ENCODE measurements at regions of chr6 and their contacts with region 1.

Region 1: DNA sequence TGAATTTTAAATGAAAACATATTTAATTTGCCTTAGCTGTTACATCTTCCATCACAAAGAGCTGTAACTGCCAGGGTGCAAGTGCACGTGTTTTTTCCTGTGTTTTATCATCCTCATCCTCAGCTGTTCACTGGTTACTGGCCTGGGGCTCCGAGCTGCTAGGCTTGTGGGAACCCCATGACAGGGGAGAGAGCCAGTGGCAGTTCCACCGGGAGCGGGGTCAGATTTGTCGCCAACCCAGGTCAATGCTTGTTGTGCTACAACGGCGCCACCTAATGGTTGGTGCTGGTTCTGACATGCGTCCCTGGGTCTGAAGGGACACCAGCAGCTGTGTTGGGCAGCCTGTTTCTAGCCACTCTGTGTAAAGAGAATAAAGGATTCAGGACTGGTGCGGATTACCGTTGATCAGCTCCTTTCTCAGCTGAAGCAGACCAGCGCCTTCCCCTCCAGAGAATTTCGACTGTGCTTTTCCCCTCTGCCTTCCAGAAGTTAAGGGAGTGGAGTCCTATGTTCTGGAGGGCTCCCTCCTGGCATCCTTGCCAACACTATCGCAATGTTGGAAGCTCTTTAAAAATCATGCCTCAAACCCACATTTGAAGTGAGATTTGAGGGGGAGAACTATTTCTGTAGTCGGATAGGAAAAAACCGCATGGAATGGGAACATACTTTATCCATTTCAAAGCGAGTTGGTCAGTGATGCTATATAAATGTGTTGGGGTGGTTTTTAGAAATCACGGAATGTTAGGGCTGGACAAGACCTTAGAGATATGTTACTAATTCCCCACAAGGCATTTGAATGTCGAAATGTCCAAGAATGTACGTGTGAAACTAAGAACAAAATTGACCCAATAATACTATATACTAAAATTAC is 32.1 kb downstream of the SUMO4 start:
- DNase-seq: peak; percentile 75 to 83 (median 80)
- H3K4me3 ChIP-seq: peak overlapping the region in 1 of 2 donors; percentile 3
- H3K4me3 Mint-ChIP-seq: peak overlapping the region in 7 of 8 donors; percentile 72 to 84 (median 80)
- H3K27ac ChIP-seq: no peak overlapping the region
- H3K27ac Mint-ChIP-seq: peak overlapping the region in 6 of 7 donors; percentile 56 to 93 (median 76)
- H3K4me1 ChIP-seq: peaks cover 8% of the 10 kb centered on the region
- H3K4me1 Mint-ChIP-seq: peaks cover 4 to 9% (median 6%) of the 10 kb centered on the region in 4 donors
- H3K27me3 ChIP-seq: no peaks in the 10 kb centered on the region
- H3K27me3 Mint-ChIP-seq: no peaks in the 10 kb centered on the region

Region 2: DNA sequence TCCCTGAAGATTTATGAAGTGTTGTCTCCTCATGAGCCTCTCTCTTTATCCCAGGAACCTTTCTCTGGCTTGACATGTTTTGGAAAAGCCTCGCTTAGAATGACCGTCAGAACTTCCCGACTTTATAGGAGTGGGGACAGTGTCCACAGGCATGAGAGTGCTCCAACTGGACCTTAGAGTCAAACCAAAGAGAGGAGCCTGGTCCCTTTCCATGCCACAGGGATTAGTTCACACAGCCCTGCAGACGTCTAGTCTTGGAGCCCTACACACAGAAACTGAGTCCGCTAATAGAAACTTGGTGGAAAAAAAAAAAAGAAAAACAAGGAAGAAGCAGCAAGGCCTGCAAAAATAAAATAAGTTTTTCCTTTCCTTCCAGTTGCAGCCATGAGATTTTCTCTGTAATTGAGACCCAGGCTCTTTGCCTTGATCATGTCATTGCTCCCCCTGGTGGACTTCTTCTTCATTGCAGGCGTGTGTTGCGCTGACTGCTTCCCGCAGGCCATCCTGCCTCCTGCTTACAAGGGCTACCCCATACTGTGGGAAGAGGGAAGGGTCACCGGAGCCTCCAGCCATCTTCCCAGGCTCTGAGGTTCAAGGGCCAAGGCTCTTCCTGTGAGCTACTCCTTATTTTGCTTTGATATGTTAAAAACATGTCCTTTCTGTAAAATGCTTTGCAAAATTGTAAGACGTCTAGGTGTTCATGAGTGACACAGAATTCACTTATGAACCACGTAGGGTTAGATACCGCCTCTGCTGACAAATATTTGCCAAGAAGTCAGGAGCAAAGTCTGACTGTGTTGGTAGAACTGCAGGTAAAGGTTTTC is 484.3 kb before region 1 on chr6:
- CTCF ChIA-PET with region 1: no interaction called
- POLR2A ChIA-PET with region 1: no interaction called
- intact Hi-C with region 1: no loop called
- DNase-seq: peak; percentile 70 to 82 (median 79)
- H3K4me3 ChIP-seq: no peak overlapping the region
- H3K4me3 Mint-ChIP-seq: no peak overlapping the region
- H3K27ac ChIP-seq: no peak overlapping the region
- H3K27ac Mint-ChIP-seq: no peak overlapping the region
- H3K4me1 ChIP-seq: no peaks in the 10 kb centered on the region
- H3K4me1 Mint-ChIP-seq: peaks cover 0 to 5% (median 4%) of the 10 kb centered on the region in 4 donors
- H3K27me3 ChIP-seq: no peaks in the 10 kb centered on the region
- H3K27me3 Mint-ChIP-seq: no peaks in the 10 kb centered on the region

Region 3: GRCh38 chr6:149028767-149029405 is 403.3 kb before region 1 on chr6:
- CTCF ChIA-PET with region 1: interaction called, 239 read pairs
- POLR2A ChIA-PET with region 1: interaction called, 14 read pairs
- intact Hi-C with region 1: loop called (anchors 1 kb)
- DNase-seq: peak; percentile 77 to 80 (median 78)
- H3K4me3 ChIP-seq: no peak overlapping the region
- H3K4me3 Mint-ChIP-seq: peak overlapping the region in 2 of 8 donors; percentile 66 to 69
- H3K27ac ChIP-seq: no peak overlapping the region
- H3K27ac Mint-ChIP-seq: peak overlapping the region in 6 of 7 donors; percentile 10 to 93 (median 78)
- H3K4me1 ChIP-seq: peaks cover 49% of the 10 kb centered on the region
- H3K4me1 Mint-ChIP-seq: peaks cover 33 to 46% (median 42%) of the 10 kb centered on the region in 4 donors
- H3K27me3 ChIP-seq: no peaks in the 10 kb centered on the region
- H3K27me3 Mint-ChIP-seq: no peaks in the 10 kb centered on the region

Region 4: GRCh38 chr6:149065658-149066556 is 366.2 kb before region 1 on chr6:
- CTCF ChIA-PET with region 1: interaction called, 15 read pairs
- POLR2A ChIA-PET with region 1: interaction called, 6 read pairs
- intact Hi-C with region 1: no loop called
- DNase-seq: peak; percentile 80 to 88 (median 85)
- H3K4me3 ChIP-seq: peak overlapping the region in 1 of 2 donors; percentile 31
- H3K4me3 Mint-ChIP-seq: peak overlapping the region; percentile 47 to 87 (median 82)
- H3K27ac ChIP-seq: peak overlapping the region; percentile 73
- H3K27ac Mint-ChIP-seq: peak overlapping the region; percentile 63 to 99 (median 98)
- H3K4me1 ChIP-seq: peaks cover 46% of the 10 kb centered on the region
- H3K4me1 Mint-ChIP-seq: peaks cover 25 to 55% (median 29%) of the 10 kb centered on the region in 4 donors
- H3K27me3 ChIP-seq: no peaks in the 10 kb centered on the region
- H3K27me3 Mint-ChIP-seq: no peaks in the 10 kb centered on the region

Region 5: GRCh38 chr6:149094156-149094555 is 338.0 kb before region 1 on chr6:
- CTCF ChIA-PET with region 1: interaction called, 83 read pairs
- POLR2A ChIA-PET with region 1: no interaction called
- intact Hi-C with region 1: no loop called
- DNase-seq: peak in 1 of 5 donors; percentile 12
- H3K4me3 ChIP-seq: peak overlapping the region in 1 of 2 donors; percentile 13
- H3K4me3 Mint-ChIP-seq: peak overlapping the region; percentile 57 to 76 (median 68)
- H3K27ac ChIP-seq: peak overlapping the region; percentile 27
- H3K27ac Mint-ChIP-seq: peak overlapping the region; percentile 74 to 96 (median 92)
- H3K4me1 ChIP-seq: peaks cover 65% of the 10 kb centered on the region
- H3K4me1 Mint-ChIP-seq: peaks cover 36 to 63% (median 52%) of the 10 kb centered on the region in 4 donors
- H3K27me3 ChIP-seq: no peaks in the 10 kb centered on the region
- H3K27me3 Mint-ChIP-seq: no peaks in the 10 kb centered on the region

Region 6: DNA sequence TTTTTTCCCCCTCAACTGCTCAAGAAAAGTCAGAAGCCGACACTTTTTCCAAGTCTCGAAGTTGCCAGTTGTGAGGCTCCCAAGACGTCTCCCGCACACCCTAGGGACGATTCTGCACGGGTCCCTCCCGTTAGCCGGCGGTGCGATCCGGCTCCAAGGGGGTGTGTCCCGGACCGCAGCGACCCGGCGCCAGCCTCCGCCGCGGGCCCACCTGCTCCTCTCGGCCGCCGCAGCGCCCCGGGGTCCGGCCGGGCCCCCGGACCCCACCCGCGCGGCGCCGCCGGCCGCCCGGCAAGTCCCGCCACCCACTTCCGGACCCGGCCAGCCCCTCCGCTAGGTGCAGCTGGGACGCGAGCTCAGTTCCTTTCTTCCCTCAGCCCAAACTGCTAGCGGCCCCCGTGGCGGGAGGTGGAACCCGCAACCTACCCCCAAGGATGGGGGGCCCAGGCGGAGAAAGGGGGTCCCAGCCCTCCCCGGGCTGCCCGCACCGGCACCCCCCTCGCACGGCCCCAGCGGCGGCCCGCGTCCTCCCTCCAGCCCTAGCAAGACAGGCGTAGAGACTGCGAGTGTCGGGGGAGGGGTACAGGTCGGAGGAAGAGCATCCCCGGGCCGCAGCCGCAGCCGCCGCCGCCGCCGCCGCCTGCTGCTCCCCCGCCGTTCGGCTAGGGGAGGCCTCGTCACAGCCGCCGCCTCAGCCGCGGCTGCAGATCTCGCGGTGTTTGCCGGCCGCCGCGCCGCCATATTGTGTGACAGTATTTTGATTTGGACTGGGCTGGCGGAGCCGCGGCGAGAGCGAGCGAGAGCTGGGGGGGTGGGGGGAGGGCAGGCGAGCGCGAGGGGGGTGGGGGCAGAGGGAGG is 115.1 kb before region 1 on chr6:
- CTCF ChIA-PET with region 1: interaction called, 11 read pairs
- POLR2A ChIA-PET with region 1: interaction called, 4 read pairs
- intact Hi-C with region 1: loop called (anchors 5 kb)
- DNase-seq: peak; percentile 91 to 93 (median 92)
- H3K4me3 ChIP-seq: peak overlapping the region; percentile 27 to 64
- H3K4me3 Mint-ChIP-seq: peak overlapping the region; percentile 80 to 93 (median 87)
- H3K27ac ChIP-seq: peak overlapping the region; percentile 86
- H3K27ac Mint-ChIP-seq: peak overlapping the region; percentile 86 to 93 (median 89)
- H3K4me1 ChIP-seq: peaks cover 33% of the 10 kb centered on the region
- H3K4me1 Mint-ChIP-seq: peaks cover 14 to 40% (median 24%) of the 10 kb centered on the region in 4 donors
- H3K27me3 ChIP-seq: no peaks in the 10 kb centered on the region
- H3K27me3 Mint-ChIP-seq: no peaks in the 10 kb centered on the region

Region 7: GRCh38 chr6:149513915-149514314 is 81.8 kb after region 1 on chr6:
- CTCF ChIA-PET with region 1: interaction called, 59 read pairs
- POLR2A ChIA-PET with region 1: interaction called, 10 read pairs
- intact Hi-C with region 1: loop called (anchors 1 kb)
- DNase-seq: no peak
- H3K4me3 ChIP-seq: no peak overlapping the region
- H3K4me3 Mint-ChIP-seq: no peak overlapping the region
- H3K27ac ChIP-seq: no peak overlapping the region
- H3K27ac Mint-ChIP-seq: peak overlapping the region in 5 of 7 donors; percentile 36 to 85 (median 36)
- H3K4me1 ChIP-seq: peaks cover 18% of the 10 kb centered on the region
- H3K4me1 Mint-ChIP-seq: peaks cover 16 to 45% (median 17%) of the 10 kb centered on the region in 4 donors
- H3K27me3 ChIP-seq: no peaks in the 10 kb centered on the region
- H3K27me3 Mint-ChIP-seq: no peaks in the 10 kb centered on the region